CD4-positive, alpha-beta memory T cell (primary cell): ENCODE measurements at regions of chr5 and their contacts with region 1.

Region 1: DNA sequence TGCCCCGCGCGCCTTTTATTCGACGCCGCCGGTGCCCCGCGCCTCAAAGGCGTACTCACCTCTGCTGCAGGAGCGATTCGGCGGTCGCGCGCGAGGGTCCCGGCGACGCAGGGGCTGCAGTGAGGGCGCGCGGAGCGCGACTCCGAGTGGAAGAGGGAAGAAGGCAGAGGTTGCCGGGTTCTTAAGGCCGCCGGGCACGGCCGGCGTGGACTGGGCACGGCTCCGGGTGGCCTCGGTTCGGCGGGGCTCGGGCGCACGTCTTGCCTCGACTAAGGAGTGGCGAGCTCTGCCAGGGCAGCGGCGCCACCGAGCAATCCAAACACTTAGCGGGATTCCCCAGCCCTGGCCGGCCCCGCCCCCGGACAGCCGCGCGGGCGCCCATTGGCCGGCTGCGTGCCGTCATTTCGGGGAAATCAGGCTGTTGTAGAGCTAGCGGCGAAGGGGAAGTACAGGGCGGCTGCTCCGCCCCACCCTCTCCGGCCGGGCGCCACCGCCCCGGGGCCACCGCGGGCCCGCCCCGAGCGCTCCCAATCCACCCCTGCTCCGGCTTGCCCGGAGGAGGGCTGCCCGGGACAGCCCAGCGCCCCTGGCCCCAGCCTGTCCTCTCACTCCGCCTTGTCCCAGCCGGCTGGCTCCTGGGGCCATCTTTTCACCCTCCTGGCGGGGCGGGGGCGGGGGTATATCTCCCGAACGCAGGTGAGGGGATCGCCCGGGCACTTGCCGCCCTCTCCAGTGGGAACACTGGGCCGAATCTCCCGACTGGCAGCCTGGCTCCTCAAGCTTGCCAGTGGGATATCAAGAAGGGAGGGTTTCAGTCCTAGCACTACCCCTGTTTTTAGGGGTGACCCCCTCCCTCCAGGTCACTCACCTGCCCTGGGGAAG is at the start of gene IRF1:
- DNase-seq: peak; percentile 97 to 99 (median 99)
- H3K4me3 ChIP-seq: peak within 1 kb of the TSS; percentile 94 to 96
- H3K4me3 Mint-ChIP-seq: peak within 1 kb of the TSS; percentile 94 to 97 (median 96)
- H3K27ac ChIP-seq: peak within 1 kb of the TSS; percentile 99
- H3K27ac Mint-ChIP-seq: peak within 1 kb of the TSS; percentile 93 to 99 (median 99)
- H3K4me1 ChIP-seq: peaks cover 79% of the 10 kb centered on the region
- H3K4me1 Mint-ChIP-seq: peaks cover 46 to 83% (median 61%) of the 10 kb centered on the region in 4 donors
- H3K27me3 ChIP-seq: no peaks in the 10 kb centered on the region
- H3K27me3 Mint-ChIP-seq: no peaks in the 10 kb centered on the region
- total RNA-seq, gene IRF1: 192 to 202 TPM

Region 2: DNA sequence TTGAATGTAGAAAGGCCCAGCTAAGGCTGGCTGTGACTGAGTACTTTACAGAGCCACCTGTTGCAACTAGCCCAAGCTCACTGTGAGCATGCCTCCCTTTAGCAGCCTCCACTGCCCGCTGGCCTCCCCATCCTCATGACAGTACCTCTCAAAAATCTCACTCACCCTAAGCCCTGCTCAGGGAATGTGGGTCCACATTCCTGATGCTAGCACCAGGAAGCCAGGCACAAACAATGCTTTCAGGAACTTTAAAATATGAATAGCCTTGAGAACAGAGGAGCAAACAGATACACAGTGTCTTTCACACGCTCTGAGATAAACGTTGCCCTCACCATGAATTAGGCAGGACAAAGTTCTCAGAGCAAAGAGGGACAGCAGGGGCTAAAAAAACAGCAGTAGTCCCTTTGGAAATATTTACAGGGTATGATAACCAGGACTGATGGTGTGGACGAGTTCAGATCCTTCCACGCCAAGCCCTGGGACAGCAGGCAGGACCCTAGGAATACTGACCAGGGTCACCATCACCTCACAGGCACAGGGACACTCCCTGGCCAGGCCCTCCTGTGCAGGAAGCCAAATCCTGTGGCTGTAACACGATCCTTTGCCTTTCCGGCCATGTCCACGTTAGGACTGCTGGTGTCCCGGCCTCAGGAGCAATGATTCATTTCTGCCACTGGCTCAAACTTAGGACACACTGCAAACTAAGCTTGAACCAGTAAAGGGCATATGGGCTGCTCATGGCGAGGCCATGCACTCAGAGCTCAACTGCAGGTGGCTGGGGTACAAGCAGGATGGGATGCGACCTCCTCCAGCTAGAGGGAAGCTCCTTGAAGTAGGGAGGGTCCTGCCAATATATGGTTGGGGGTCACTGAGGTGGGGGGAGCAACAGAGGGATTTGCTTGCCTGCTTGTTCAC is 488.8 kb before region 1 on chr5:
- CTCF ChIA-PET with region 1: no interaction called
- POLR2A ChIA-PET with region 1: no interaction called
- intact Hi-C with region 1: no loop called
- DNase-seq: no peak
- H3K4me3 ChIP-seq: no peak overlapping the region
- H3K4me3 Mint-ChIP-seq: peak overlapping the region in 6 of 8 donors; percentile 26 to 83 (median 52)
- H3K27ac ChIP-seq: no peak overlapping the region
- H3K27ac Mint-ChIP-seq: peak overlapping the region in 6 of 7 donors; percentile 18 to 80 (median 62)
- H3K4me1 ChIP-seq: peaks cover 66% of the 10 kb centered on the region
- H3K4me1 Mint-ChIP-seq: peaks cover 44 to 68% (median 58%) of the 10 kb centered on the region in 4 donors
- H3K27me3 ChIP-seq: no peaks in the 10 kb centered on the region
- H3K27me3 Mint-ChIP-seq: no peaks in the 10 kb centered on the region

Region 3: DNA sequence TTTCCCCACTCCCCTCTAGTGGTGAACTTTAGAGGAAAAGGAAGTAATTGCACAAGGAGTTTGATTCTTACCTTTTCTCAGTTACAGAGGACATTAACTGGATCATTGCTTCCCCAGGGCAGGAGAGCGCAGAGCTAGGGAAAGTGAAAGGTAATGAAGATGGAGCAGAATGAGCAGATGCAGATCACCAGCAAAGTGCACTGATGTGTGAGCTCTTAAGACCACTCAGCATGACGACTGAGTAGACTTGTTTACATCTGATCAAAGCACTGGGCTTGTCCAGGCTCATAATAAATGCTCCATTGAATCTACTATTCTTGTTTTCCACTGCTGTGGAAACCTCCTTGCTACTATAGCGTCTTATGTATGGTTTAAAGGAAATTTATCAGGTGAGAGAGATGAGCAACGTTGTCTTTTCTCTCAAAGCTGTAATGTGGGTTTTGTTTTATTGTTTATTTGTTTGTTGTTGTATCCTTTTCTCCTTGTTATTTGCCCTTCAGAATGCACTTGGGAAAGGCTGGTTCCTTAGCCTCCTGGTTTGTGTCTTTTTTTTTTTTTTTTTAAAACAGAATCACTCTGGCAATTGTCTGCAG is 96.0 kb before region 1 on chr5:
- CTCF ChIA-PET with region 1: interaction called, 543 read pairs
- POLR2A ChIA-PET with region 1: interaction called, 151 read pairs
- intact Hi-C with region 1: no loop called
- DNase-seq: no peak
- H3K4me3 ChIP-seq: no peak overlapping the region
- H3K4me3 Mint-ChIP-seq: peak overlapping the region in 4 of 8 donors; percentile 2 to 65 (median 59)
- H3K27ac ChIP-seq: no peak overlapping the region
- H3K27ac Mint-ChIP-seq: peak overlapping the region; percentile 50 to 92 (median 77)
- H3K4me1 ChIP-seq: peaks cover 70% of the 10 kb centered on the region
- H3K4me1 Mint-ChIP-seq: peaks cover 53 to 97% (median 72%) of the 10 kb centered on the region in 4 donors
- H3K27me3 ChIP-seq: no peaks in the 10 kb centered on the region
- H3K27me3 Mint-ChIP-seq: no peaks in the 10 kb centered on the region

Region 4: GRCh38 chr5:132426525-132427138 is 64.1 kb before region 1 on chr5:
- CTCF ChIA-PET with region 1: interaction called, 94 read pairs
- POLR2A ChIA-PET with region 1: interaction called, 565 read pairs
- intact Hi-C with region 1: loop called (anchors 1 kb)
- DNase-seq: peak; percentile 37 to 83 (median 44)
- H3K4me3 ChIP-seq: peak overlapping the region; percentile 10 to 28
- H3K4me3 Mint-ChIP-seq: peak overlapping the region; percentile 67 to 83 (median 76)
- H3K27ac ChIP-seq: peak overlapping the region; percentile 77
- H3K27ac Mint-ChIP-seq: peak overlapping the region; percentile 96 to 99 (median 98)
- H3K4me1 ChIP-seq: peaks cover 100% of the 10 kb centered on the region
- H3K4me1 Mint-ChIP-seq: peaks cover 80 to 98% (median 94%) of the 10 kb centered on the region in 4 donors
- H3K27me3 ChIP-seq: no peaks in the 10 kb centered on the region
- H3K27me3 Mint-ChIP-seq: no peaks in the 10 kb centered on the region

Region 5: DNA sequence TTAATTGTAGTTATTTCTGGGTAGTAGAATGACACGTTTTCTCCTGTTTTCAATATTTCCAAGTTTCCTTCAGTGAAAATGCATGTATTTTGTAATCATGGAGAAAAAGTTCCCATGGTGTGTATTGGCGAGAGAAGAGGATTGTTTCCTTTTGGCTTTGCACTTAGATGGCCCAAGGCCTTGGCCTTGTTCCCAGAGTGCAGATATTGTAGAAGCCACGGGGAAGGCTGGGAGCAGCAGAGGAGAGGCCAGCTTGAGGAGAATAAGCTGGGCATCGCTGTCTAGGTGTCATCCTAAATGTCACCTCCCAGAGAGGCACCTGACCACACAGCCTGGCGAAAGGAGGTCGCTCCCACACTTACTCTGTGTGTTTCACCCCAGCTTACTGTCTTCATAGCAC is 44.1 kb before region 1 on chr5:
- CTCF ChIA-PET with region 1: interaction called, 8 read pairs
- POLR2A ChIA-PET with region 1: interaction called, 44 read pairs
- intact Hi-C with region 1: no loop called
- DNase-seq: no peak
- H3K4me3 ChIP-seq: peak overlapping the region in 1 of 2 donors; percentile 7
- H3K4me3 Mint-ChIP-seq: peak overlapping the region; percentile 43 to 81 (median 75)
- H3K27ac ChIP-seq: peak overlapping the region; percentile 5
- H3K27ac Mint-ChIP-seq: peak overlapping the region; percentile 73 to 94 (median 89)
- H3K4me1 ChIP-seq: peaks cover 90% of the 10 kb centered on the region
- H3K4me1 Mint-ChIP-seq: peaks cover 56 to 97% (median 76%) of the 10 kb centered on the region in 4 donors
- H3K27me3 ChIP-seq: no peaks in the 10 kb centered on the region
- H3K27me3 Mint-ChIP-seq: no peaks in the 10 kb centered on the region

Region 6: GRCh38 chr5:132466433-132467286 is 24.1 kb before region 1 on chr5:
- CTCF ChIA-PET with region 1: interaction called, 92 read pairs
- POLR2A ChIA-PET with region 1: interaction called, 1,580 read pairs
- intact Hi-C with region 1: loop called (anchors 2 kb)
- DNase-seq: peak; percentile 84 to 91 (median 85)
- H3K4me3 ChIP-seq: peak overlapping the region; percentile 2 to 50
- H3K4me3 Mint-ChIP-seq: peak overlapping the region; percentile 66 to 87 (median 83)
- H3K27ac ChIP-seq: peak overlapping the region; percentile 63
- H3K27ac Mint-ChIP-seq: peak overlapping the region; percentile 94 to 98 (median 96)
- H3K4me1 ChIP-seq: peaks cover 99% of the 10 kb centered on the region
- H3K4me1 Mint-ChIP-seq: peaks cover 76 to 100% (median 90%) of the 10 kb centered on the region in 4 donors
- H3K27me3 ChIP-seq: no peaks in the 10 kb centered on the region
- H3K27me3 Mint-ChIP-seq: no peaks in the 10 kb centered on the region

Region 7: GRCh38 chr5:132556763-132557477 is 66.2 kb after region 1 on chr5 and contains the start of gene RAD50:
- CTCF ChIA-PET with region 1: no interaction called
- POLR2A ChIA-PET with region 1: interaction called, 14 read pairs
- intact Hi-C with region 1: no loop called
- DNase-seq: peak; percentile 88 to 92 (median 90)
- H3K4me3 ChIP-seq: peak within 1 kb of the TSS; percentile 43 to 64
- H3K4me3 Mint-ChIP-seq: peak within 1 kb of the TSS; percentile 93 to 99 (median 96)
- H3K27ac ChIP-seq: peak within 1 kb of the TSS; percentile 69
- H3K27ac Mint-ChIP-seq: peak within 1 kb of the TSS; percentile 94 to 98 (median 96)
- H3K4me1 ChIP-seq: peaks cover 46% of the 10 kb centered on the region
- H3K4me1 Mint-ChIP-seq: peaks cover 18 to 35% (median 26%) of the 10 kb centered on the region in 4 donors
- H3K27me3 ChIP-seq: no peaks in the 10 kb centered on the region
- H3K27me3 Mint-ChIP-seq: no peaks in the 10 kb centered on the region
- total RNA-seq, gene RAD50: 33.3 to 35.0 TPM